Activated CD8-positive, alpha-beta T cell treated with anti-CD3 and anti-CD28 coated beads for 36 hours (primary cell): ENCODE measurements at regions of chr2 and their contacts with region 1.

Region 1: GRCh38 chr2:121071034-121071504 is 213.9 kb downstream of the TFCP2L1 start:
- DNase-seq: peak; percentile 70
- ATAC-seq: peak; percentile 30
- H3K4me3 Mint-ChIP-seq: no peak overlapping the region
- H3K27ac Mint-ChIP-seq: no peak overlapping the region
- H3K4me1 Mint-ChIP-seq: no peaks in the 10 kb centered on the region
- H3K27me3 Mint-ChIP-seq: peaks cover 13% of the 10 kb centered on the region
- CTCF ChIP-seq: peak; percentile 94

Region 2: DNA sequence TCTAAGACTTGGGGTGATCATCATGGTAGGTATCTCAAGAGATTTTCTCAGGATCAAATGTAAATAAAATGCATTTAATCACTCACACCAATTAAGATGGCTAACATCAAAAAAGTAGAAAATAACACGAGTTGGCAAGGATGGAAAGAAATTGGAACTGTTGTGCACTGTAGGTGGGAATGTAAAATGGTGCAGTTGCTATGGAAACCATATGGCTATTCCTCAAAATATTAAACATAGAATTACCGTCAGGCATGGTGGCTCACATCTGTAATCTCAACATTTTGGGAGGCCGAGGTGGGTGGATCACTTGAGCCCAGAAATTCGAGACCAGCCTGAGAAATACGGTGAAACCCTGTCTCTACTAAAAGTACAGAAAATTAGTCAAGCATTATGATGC is 374.2 kb before region 1 on chr2:
- CTCF ChIA-PET with region 1: interaction called, 15 read pairs
- POLR2A ChIA-PET with region 1: interaction called, 5 read pairs
- intact Hi-C with region 1: loop called (anchors 2 kb)
- DNase-seq: no peak
- ATAC-seq: no peak
- H3K4me3 Mint-ChIP-seq: no peak overlapping the region
- H3K27ac Mint-ChIP-seq: no peak overlapping the region
- H3K4me1 Mint-ChIP-seq: peaks cover 5% of the 10 kb centered on the region
- H3K27me3 Mint-ChIP-seq: peaks cover 32% of the 10 kb centered on the region
- CTCF ChIP-seq: no peak

Region 3: GRCh38 chr2:121049141-121049540 is 21.9 kb before region 1 on chr2:
- CTCF ChIA-PET with region 1: no interaction called
- POLR2A ChIA-PET with region 1: no interaction called
- intact Hi-C with region 1: no loop called
- DNase-seq: no peak
- ATAC-seq: no peak
- H3K4me3 Mint-ChIP-seq: no peak overlapping the region
- H3K27ac Mint-ChIP-seq: no peak overlapping the region
- H3K4me1 Mint-ChIP-seq: no peaks in the 10 kb centered on the region
- H3K27me3 Mint-ChIP-seq: no peaks in the 10 kb centered on the region
- CTCF ChIP-seq: no peak